ENCODE measurements at regions of chr15 and their contacts with region 1.

Region 1: DNA sequence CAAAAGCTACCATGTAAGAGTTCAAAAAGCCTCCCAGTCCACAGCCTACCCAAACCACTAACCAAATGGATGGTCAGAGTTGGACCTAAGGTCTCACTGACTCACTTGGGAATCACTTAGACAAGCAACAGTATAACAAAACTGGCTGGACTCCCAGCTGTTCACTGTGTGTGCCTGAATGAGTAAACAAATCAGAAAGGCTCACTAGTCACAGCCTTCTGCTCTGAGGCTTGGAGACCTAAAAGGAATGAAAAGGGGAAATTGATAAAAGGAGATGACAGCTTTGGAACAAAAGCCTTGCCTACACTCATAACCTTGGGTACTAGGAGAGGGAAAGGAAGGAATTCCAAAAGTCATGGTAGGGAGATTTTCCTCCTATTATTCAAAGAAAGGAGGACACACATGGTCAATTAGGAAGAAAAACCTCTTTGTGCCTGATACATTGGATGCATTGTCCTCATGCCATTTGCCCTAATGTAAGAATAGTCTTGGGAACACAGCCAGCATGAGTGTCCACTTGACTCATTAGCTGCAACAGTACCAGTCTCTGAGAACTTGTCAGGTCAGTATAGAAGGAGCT is 92.3 kb downstream of the FRMD5 start:
- DNase-seq: peak; percentile 43 to 89
- H3K4me3 ChIP-seq: no peak overlapping the region
- H3K27ac ChIP-seq: peak overlapping the region; percentile 78
- H3K4me1 ChIP-seq: peaks cover 32% of the 10 kb centered on the region
- H3K27me3 ChIP-seq: no peaks in the 10 kb centered on the region
- CTCF ChIP-seq: no peak

Region 2: DNA sequence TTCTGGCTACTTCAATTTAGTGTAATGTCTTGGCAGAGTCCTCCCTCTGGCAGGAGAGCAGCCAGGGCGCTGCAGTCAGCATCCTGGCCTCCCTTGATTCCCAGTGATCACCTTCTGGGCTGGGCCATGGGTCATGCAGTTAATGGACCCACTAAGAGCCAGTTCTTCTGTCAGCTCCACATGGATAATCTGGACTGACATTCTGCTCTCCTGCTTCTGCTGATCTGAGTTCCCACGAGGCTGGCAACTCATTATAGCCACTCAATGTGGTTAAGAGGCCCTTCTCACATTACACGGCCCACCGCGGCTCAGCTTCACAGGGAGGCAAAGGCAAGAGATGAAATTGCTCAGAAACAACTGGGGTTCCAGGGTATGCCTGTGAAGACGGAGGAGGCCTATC is 181.9 kb before region 1 on chr15:
- CTCF ChIA-PET with region 1: no interaction called
- POLR2A ChIA-PET with region 1: no interaction called
- intact Hi-C with region 1: no loop called
- DNase-seq: no peak
- H3K4me3 ChIP-seq: no peak overlapping the region
- H3K27ac ChIP-seq: no peak overlapping the region
- H3K4me1 ChIP-seq: peaks cover 10% of the 10 kb centered on the region; the same call in 1 of the 2 replicates
- H3K27me3 ChIP-seq: no peaks in the 10 kb centered on the region
- CTCF ChIP-seq: no peak

Region 3: DNA sequence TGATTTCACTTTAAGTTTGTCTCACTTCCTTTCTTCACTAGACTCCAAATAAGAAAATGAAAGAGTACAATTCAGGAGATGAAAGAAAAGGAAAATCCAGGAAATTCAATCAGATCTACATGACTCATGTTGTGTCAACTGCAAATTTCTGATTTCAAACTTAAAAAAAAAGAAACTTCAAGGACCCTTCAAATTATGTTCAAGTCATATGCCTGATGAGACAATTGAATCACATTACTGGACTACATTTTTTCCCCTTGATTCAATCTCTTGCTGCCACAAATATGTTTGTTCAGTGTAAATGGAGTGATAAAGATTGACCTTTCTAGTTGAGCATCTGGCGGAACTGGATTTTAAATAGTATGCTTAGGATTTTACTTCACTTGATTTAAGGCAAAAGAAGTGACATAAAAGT is 54.9 kb after region 1 on chr15:
- CTCF ChIA-PET with region 1: no interaction called
- POLR2A ChIA-PET with region 1: interaction called, 9 read pairs
- intact Hi-C with region 1: loop called (anchors 2 kb)
- DNase-seq: peak; percentile 4 to 95
- H3K4me3 ChIP-seq: peak overlapping the region; percentile 27; the same call in 1 of the 2 replicates
- H3K27ac ChIP-seq: peak overlapping the region; percentile 82
- H3K4me1 ChIP-seq: peaks cover 39% of the 10 kb centered on the region
- H3K27me3 ChIP-seq: no peaks in the 10 kb centered on the region
- CTCF ChIP-seq: no peak

Region 4: DNA sequence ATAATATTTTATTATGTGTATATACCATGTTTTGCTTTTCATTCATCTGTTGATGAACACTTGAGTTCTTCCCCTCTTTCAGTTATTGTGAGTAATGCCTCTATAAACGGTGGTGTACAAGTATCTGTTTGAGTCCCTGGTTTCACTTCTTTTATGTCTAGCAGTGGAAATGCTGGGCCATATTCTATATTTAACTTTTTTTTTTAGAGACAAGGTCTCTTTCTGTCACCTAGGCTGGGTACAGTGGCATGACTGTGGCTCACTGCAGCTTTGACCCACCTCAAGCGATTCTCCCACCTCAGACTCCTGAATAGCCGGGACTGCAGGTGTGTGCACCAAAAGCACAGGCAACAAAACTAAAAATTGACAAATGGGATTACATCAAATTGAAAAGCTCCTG is 205.7 kb after region 1 on chr15:
- CTCF ChIA-PET with region 1: no interaction called
- POLR2A ChIA-PET with region 1: interaction called, 10 read pairs
- intact Hi-C with region 1: no loop called
- DNase-seq: no peak
- H3K4me3 ChIP-seq: no peak overlapping the region
- H3K27ac ChIP-seq: no peak overlapping the region
- H3K4me1 ChIP-seq: 0 out of 2 replicates have a peak, but pooled peaks cover 7% of the 10 kb centered on the region
- H3K27me3 ChIP-seq: no peaks in the 10 kb centered on the region
- CTCF ChIP-seq: no peak